ENCODE measurements at regions of chr4 and their contacts with region 1.

Region 1: GRCh38 chr4:56937262-56937661 is 29.6 kb downstream of the REST start:
- DNase-seq: peak; percentile 98
- ATAC-seq: peak; percentile 94
- H3K4me3 ChIP-seq: no peak overlapping the region
- H3K27ac ChIP-seq: no peak overlapping the region
- H3K4me1 ChIP-seq: peaks cover 12% of the 10 kb centered on the region
- H3K27me3 ChIP-seq: no peaks in the 10 kb centered on the region
- CTCF ChIP-seq: no peak

Region 2: GRCh38 chr4:56799824-56800756 is 137.2 kb before region 1 on chr4:
- CTCF ChIA-PET with region 1: no interaction called
- POLR2A ChIA-PET with region 1: no interaction called
- intact Hi-C with region 1: no loop called
- DNase-seq: peak; percentile 91
- ATAC-seq: peak; percentile 99
- H3K4me3 ChIP-seq: peak overlapping the region; percentile 72
- H3K27ac ChIP-seq: no peak overlapping the region
- H3K4me1 ChIP-seq: no peaks in the 10 kb centered on the region
- H3K27me3 ChIP-seq: no peaks in the 10 kb centered on the region
- CTCF ChIP-seq: peak; percentile 97

Region 3: GRCh38 chr4:56874166-56874565 is 63.1 kb before region 1 on chr4:
- CTCF ChIA-PET with region 1: no interaction called
- POLR2A ChIA-PET with region 1: no interaction called
- intact Hi-C with region 1: no loop called
- DNase-seq: peak; percentile 55
- ATAC-seq: peak; percentile 15; the same call in 1 of the 2 replicates
- H3K4me3 ChIP-seq: peak overlapping the region; percentile 25; the same call in 1 of the 2 replicates
- H3K27ac ChIP-seq: no peak overlapping the region
- H3K4me1 ChIP-seq: no peaks in the 10 kb centered on the region
- H3K27me3 ChIP-seq: no peaks in the 10 kb centered on the region
- CTCF ChIP-seq: no peak

Region 4: DNA sequence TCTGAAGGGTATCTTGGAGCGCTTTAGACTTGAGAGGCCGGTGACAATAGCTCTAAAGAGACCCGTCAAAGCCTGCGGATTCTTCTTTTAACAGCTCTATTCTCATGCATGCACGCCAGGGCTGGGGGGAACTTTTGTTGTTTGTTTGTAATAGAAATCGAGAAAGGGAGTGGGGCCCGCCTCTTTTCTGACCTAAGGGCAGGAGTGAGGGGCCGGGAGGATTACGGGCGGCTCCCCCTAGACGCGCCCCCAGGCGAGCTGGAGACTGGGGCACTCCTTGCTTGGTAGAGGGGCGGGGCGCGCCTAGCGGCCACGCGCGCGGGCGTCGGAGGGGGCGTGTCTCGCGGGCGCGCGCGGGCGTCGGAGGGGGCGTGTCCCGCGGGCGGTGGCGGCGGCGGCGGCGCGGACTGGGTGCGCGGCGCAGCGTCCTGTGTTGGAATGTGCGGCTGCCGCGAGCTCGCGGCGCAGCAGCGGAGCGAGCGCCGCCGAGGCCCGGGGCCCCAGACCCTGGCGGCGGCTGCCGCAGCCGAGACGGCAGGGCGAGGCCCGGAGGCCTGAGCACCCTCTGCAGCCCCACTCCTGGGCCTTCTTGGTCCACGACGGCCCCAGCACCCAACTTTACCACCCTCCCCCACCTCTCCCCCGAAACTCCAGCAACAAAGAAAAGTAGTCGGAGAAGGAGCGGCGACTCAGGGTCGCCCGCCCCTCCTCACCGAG is 29.6 kb before region 1 on chr4 and contains the start of gene REST:
- CTCF ChIA-PET with region 1: no interaction called
- POLR2A ChIA-PET with region 1: no interaction called
- intact Hi-C with region 1: loop called (anchors 2 kb)
- DNase-seq: peak; percentile 79
- ATAC-seq: peak; percentile 68
- H3K4me3 ChIP-seq: peak within 1 kb of the TSS; percentile 89
- H3K27ac ChIP-seq: no peak within 1 kb of the TSS
- H3K4me1 ChIP-seq: peaks cover 20% of the 10 kb centered on the region
- H3K27me3 ChIP-seq: no peaks in the 10 kb centered on the region
- CTCF ChIP-seq: no peak
- total RNA-seq, gene REST: 21.7 and 22.4 TPM in 2 replicates

Measured in PC-3 (cell line).